ENCODE measurements at regions of chr19 and their contacts with region 1.

Region 1: GRCh38 chr19:50779504-50780457 is 9.5 kb downstream of the GPR32 start:
- DNase-seq: no peak
- H3K4me3 ChIP-seq: no peak overlapping the region
- H3K27ac ChIP-seq: no peak overlapping the region
- H3K4me1 ChIP-seq: no peaks in the 10 kb centered on the region
- H3K27me3 ChIP-seq: peaks cover 0 to 86% of the 10 kb centered on the region in 2 donors
- CTCF ChIP-seq: no peak

Region 2: DNA sequence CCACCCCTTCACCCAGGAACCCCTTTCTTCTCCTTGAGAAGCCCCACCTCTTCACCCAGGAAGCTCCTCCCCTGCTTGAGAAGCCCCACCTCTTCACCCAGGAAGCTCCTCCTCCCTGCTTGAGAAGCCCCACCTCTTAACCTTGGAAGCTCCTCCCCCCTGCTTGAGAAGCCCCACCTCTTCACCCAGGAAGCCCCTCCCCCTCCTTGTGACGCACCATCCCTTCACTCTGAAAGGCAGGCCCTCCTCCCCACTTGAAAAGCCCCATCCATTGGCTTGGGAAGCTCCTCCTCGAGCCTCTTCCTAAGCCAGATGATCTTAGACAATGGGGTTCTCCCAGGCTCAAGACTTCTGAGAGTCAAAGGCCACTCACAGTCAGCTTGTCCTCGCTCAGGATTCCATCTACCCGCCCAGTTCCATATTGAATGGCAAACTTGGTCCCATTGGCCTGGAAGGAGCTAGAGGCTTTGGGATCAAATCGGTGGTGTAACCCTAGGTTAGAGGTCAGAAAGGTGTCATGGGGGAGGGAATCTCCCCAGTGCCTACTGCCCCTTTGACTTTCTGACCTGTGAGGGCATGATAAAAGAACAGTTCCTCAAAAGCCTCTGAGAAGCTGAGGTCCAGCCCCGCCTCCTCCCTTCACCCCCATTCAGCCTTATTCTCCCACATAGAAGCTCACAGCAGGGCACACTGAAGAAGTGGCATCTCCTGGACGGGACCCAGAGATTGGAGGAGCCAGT is 418.3 kb before region 1 on chr19:
- intact Hi-C with region 1: loop called (anchors 5 kb)
- DNase-seq: no peak
- H3K4me3 ChIP-seq: no peak overlapping the region
- H3K27ac ChIP-seq: no peak overlapping the region
- H3K4me1 ChIP-seq: peaks cover 0 to 14% (median 2%) of the 10 kb centered on the region in 4 donors
- H3K27me3 ChIP-seq: peaks cover 0 to 12% of the 10 kb centered on the region in 2 donors
- CTCF ChIP-seq: no peak

Region 3: GRCh38 chr19:50537762-50538230 is 242.0 kb before region 1 on chr19:
- intact Hi-C with region 1: loop called (anchors 10 kb)
- DNase-seq: peak; percentile 47 to 83
- H3K4me3 ChIP-seq: no peak overlapping the region
- H3K27ac ChIP-seq: peak overlapping the region in 1 of 2 donors; percentile 26
- H3K4me1 ChIP-seq: peaks cover 0 to 7% (median 0%) of the 10 kb centered on the region in 4 donors
- H3K27me3 ChIP-seq: peaks cover 0 to 5% of the 10 kb centered on the region in 2 donors
- CTCF ChIP-seq: peak; percentile 66 to 71

Measured in tibial artery (tissue), 4 donors.